Spleen (tissue), 13 donors: ENCODE measurements at regions of chr10 and their contacts with region 1.

Region 1: DNA sequence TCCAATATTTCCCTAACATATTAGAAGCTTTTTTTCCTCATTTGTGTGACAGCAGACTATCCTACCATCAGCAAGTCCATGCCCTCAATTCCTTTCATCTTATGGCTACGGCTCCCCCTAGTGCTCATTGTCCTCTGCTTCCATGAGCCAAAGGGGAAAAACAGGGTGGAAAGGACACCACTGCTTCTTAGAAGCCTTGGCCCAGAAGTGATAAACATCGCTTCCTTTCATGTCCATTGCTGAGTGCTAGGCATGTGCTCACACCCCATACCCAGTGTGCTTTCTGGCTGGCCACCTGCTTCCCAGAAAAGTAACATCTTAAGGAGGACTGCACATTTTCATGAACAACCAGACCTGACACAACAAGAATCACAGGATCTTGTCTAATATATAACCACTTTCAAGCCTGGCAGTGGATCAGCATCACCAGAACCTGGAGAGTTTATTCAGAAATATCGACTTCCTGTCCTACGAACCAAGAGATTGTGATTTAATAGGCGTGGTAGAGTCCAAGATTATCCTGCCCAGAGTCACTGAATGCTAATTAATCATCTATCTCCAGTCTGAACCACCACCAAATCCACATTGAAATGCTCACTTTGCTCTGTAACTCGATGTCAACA is 650.5 kb upstream of the SORCS1 start:
- DNase-seq: no peak
- H3K4me3 ChIP-seq: no peak overlapping the region
- H3K27ac ChIP-seq: no peak overlapping the region
- H3K4me1 ChIP-seq: no peaks in the 10 kb centered on the region
- H3K27me3 ChIP-seq: no peaks in the 10 kb centered on the region
- CTCF ChIP-seq: peak in 9 of 11 experiments; percentile 22 to 70 (median 56)
- POLR2A ChIP-seq: no peak

Region 2: GRCh38 chr10:106705681-106706100 is 1109.3 kb before region 1 on chr10:
- intact Hi-C with region 1: loop called (anchors 10 kb)
- DNase-seq: no peak
- H3K4me3 ChIP-seq: no peak overlapping the region
- H3K27ac ChIP-seq: no peak overlapping the region
- H3K4me1 ChIP-seq: no peaks in the 10 kb centered on the region
- H3K27me3 ChIP-seq: peaks cover 0 to 13% (median 0%) of the 10 kb centered on the region in 7 donors
- CTCF ChIP-seq: peak in 10 of 11 experiments; percentile 14 to 71 (median 49)
- POLR2A ChIP-seq: no peak

Region 3: DNA sequence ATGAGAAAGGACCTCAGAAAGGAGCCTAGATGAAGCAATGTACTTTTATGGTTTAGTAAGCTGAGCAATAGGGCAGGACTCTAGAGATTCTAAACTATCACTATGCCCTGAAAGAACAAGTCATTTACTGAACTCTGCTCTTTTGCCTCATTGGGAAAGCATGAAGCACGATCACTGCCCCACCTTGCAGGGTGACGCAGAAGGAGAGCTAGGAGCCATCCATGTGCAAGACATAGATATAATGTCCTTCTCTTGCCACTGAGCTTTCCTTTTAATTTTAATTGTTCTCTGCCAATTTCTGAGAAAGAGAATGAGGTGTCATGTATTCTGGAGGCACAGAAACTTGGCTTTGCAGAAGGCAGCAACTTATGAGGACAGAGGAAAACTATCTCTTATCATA is 758.8 kb before region 1 on chr10:
- intact Hi-C with region 1: no loop called
- DNase-seq: no peak
- H3K4me3 ChIP-seq: no peak overlapping the region
- H3K27ac ChIP-seq: no peak overlapping the region
- H3K4me1 ChIP-seq: no peaks in the 10 kb centered on the region
- H3K27me3 ChIP-seq: no peaks in the 10 kb centered on the region
- CTCF ChIP-seq: no peak
- POLR2A ChIP-seq: no peak